ENCODE measurements at regions of chr5 and their contacts with region 1.

Region 1: DNA sequence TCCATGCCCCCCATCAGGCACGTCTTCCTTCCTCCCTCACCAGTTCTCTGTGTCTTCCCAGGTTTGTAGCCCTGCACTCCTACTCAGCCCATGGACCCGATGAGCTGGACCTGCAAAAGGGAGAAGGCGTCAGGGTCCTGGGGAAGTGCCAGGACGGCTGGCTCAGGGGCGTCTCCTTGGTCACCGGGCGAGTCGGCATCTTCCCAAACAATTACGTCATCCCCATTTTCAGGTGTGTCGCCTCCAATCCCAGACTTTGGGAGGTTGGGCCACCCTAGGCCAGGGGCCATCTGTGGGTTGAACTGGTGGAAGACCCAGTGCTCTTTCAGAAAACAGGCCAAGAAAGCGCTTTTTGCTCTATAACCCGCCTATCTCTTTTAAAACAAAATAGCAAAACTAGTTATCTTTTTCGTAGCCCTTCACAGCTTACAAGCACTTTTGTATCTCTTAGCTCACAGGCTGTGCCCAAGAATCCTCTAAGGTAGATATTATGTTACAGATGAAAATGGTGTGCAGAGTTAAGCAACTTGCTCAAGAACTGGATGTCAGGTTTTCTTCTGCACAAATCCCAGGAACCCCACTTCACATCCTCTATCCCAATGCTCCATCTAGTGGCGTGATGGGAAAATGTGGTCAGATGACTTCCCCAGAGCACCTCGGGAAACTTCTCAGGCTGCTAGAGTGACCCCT is 56.2 kb downstream of the PLAC8L1 start:
- DNase-seq: peak; percentile 49
- H3K4me3 Mint-ChIP-seq: no peak overlapping the region
- H3K27ac Mint-ChIP-seq: no peak overlapping the region
- H3K4me1 Mint-ChIP-seq: no peaks in the 10 kb centered on the region
- H3K27me3 Mint-ChIP-seq: peaks cover 24% of the 10 kb centered on the region

Region 2: GRCh38 chr5:144203750-144204596 is 1845.2 kb before region 1 on chr5:
- CTCF ChIA-PET with region 1: no interaction called
- intact Hi-C with region 1: loop called (anchors 1 kb)
- DNase-seq: peak; percentile 65
- H3K4me3 Mint-ChIP-seq: no peak overlapping the region
- H3K27ac Mint-ChIP-seq: no peak overlapping the region
- H3K4me1 Mint-ChIP-seq: peaks cover 17% of the 10 kb centered on the region
- H3K27me3 Mint-ChIP-seq: peaks cover 38% of the 10 kb centered on the region

Region 3: GRCh38 chr5:145681686-145682085 is 367.5 kb before region 1 on chr5:
- CTCF ChIA-PET with region 1: no interaction called
- intact Hi-C with region 1: loop called (anchors 1 kb)
- DNase-seq: peak; percentile 62
- H3K4me3 Mint-ChIP-seq: no peak overlapping the region
- H3K27ac Mint-ChIP-seq: no peak overlapping the region
- H3K4me1 Mint-ChIP-seq: no peaks in the 10 kb centered on the region
- H3K27me3 Mint-ChIP-seq: no peaks in the 10 kb centered on the region

Region 4: DNA sequence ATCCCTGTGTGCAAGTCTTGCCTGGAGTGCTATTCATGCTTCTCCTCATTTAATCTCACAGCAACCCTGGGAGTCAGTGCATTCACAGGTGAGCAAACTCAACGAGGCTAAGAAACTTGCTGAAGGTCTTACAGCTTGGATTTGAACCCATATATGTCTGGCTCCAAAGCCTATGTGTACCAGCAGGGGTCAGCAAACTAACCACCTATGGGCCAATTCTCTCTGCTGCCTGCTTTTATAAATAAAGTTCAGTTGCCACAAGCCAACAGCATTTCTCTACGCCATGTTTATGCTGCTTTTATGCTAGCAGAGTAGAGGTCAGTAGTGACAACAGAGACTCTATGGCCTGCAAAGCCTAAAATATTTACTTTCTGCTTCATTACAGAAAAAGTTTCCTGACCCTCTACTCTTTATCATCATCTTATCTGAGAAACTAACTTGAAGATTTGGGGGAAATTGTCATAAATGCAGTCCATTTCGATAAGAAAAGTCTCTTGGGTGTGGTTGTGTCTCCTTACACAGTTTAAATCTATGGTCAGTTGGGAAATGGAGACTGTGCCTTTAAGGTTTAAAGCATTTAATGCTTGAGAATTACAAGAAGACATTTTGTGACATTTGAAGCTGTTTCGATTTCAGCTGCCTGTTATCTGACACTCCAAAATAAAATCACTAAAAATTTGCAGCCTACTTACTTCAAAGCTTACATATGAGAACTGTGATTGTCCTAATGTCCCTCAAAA is 351.7 kb before region 1 on chr5:
- CTCF ChIA-PET with region 1: no interaction called
- intact Hi-C with region 1: loop called (anchors 1 kb)
- DNase-seq: peak; percentile 29
- H3K4me3 Mint-ChIP-seq: no peak overlapping the region
- H3K27ac Mint-ChIP-seq: no peak overlapping the region
- H3K4me1 Mint-ChIP-seq: no peaks in the 10 kb centered on the region
- H3K27me3 Mint-ChIP-seq: no peaks in the 10 kb centered on the region

Region 5: GRCh38 chr5:146034125-146034524 is 15.0 kb before region 1 on chr5:
- CTCF ChIA-PET with region 1: no interaction called
- intact Hi-C with region 1: no loop called
- DNase-seq: no peak
- H3K4me3 Mint-ChIP-seq: no peak overlapping the region
- H3K27ac Mint-ChIP-seq: no peak overlapping the region
- H3K4me1 Mint-ChIP-seq: no peaks in the 10 kb centered on the region
- H3K27me3 Mint-ChIP-seq: peaks cover 2% of the 10 kb centered on the region

Region 6: DNA sequence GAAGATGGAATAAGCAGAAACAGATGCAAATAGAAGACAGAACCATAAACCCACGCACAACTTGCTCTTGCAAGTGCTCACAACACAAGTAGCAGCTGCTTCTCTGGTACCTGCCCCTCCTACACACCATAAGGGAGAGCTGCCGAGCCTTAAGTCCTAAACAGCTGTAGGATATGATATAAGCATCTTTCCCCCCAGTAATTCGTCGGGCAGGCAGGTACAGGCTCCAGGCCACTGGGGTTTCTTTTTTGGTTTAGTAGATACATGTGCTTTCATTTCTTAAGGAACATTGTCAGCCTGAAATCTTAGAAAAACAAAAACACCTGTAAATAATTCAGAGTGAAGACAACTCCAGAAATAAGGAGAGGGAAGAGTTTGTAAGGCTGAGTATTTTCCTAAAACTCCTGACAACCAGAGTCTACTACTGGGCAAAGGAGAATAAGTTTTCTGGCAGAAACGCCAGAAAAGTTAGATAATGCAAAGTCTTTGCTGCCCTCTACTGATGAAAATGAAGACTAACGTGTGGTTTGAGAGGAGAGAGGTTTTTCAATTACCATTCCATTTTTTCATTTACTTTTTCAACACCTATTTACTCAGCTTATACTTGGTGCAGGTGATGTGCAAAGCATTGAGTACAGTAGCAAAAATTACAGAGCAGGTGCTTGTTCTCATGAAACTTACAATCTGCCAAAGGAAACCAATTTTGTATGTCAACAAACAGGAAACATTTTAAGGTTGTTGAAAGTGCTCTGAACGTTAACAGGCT is 377.9 kb after region 1 on chr5:
- CTCF ChIA-PET with region 1: no interaction called
- intact Hi-C with region 1: loop called (anchors 5 kb)
- DNase-seq: peak; percentile 5
- H3K4me3 Mint-ChIP-seq: no peak overlapping the region
- H3K27ac Mint-ChIP-seq: no peak overlapping the region
- H3K4me1 Mint-ChIP-seq: peaks cover 4% of the 10 kb centered on the region
- H3K27me3 Mint-ChIP-seq: peaks cover 9% of the 10 kb centered on the region

Measured in activated naive CD4-positive, alpha-beta T cell treated with anti-CD3 and anti-CD28 coated beads for 36 hours (primary cell).